Mammary epithelial cell (primary cell): ENCODE measurements at regions of chr15 and their contacts with region 1.

Region 1: GRCh38 chr15:90701880-90702630 is 15.1 kb upstream of the BLM start:
- DNase-seq: no peak
- H3K4me3 ChIP-seq: no peak overlapping the region
- H3K27ac ChIP-seq: no peak overlapping the region
- H3K4me1 ChIP-seq: no peaks in the 10 kb centered on the region
- H3K27me3 ChIP-seq: no peaks in the 10 kb centered on the region
- CTCF ChIP-seq: no peak

Region 2: GRCh38 chr15:90660195-90660998 is 41.7 kb before region 1 on chr15:
- CTCF ChIA-PET with region 1: no interaction called
- dilution Hi-C with region 1: no loop called
- in situ Hi-C with region 1: loop called in 1 of 2 experiments (anchors 5 kb)
- intact Hi-C with region 1: no loop called
- DNase-seq: peak; percentile 98
- H3K4me3 ChIP-seq: peak overlapping the region in 1 of 3 experiments; percentile 24
- H3K27ac ChIP-seq: peak overlapping the region; percentile 74
- H3K4me1 ChIP-seq: peaks cover 29% of the 10 kb centered on the region
- H3K27me3 ChIP-seq: no peaks in the 10 kb centered on the region
- CTCF ChIP-seq: no peak

Region 3: DNA sequence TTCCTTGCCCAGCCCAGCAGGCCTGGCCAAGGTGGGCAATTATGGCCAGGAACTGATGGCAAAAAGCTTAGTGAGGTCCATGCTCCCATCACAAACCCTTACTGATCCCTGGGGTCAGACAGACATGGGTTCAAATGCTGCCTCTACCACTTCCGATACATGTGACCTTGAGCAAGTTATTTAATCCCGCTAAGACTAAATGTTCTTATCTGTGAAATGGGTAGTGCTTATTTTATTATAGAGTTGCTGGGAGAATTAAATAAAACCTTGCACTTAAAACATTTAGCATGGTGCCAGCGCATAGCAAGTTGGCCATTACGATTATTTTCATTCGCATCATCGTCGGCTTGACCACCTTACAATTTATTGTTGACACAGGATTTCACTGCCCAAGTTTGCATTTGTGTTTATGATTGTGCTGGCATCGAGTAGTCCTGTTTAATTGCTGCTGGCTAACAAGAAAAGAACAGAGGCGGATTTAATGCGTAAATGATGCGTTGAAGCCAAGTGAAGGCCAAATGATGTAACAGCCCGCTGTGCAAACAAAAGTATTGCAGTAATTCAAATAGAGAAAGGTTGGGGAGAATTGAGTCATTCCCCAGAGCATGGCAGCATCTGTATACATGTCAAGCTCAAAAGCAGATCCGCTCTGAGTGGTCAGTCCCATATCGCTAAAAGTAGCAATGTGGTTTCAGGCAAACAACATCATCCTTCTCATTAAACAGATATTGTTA is 159.1 kb after region 1 on chr15:
- CTCF ChIA-PET with region 1: no interaction called
- dilution Hi-C with region 1: no loop called
- in situ Hi-C with region 1: no loop called
- intact Hi-C with region 1: no loop called
- DNase-seq: no peak
- H3K4me3 ChIP-seq: no peak overlapping the region
- H3K27ac ChIP-seq: no peak overlapping the region
- H3K4me1 ChIP-seq: peaks cover 13% of the 10 kb centered on the region
- H3K27me3 ChIP-seq: no peaks in the 10 kb centered on the region
- CTCF ChIP-seq: no peak